ENCODE measurements at regions of chr3 and their contacts with region 1.

Region 1: DNA sequence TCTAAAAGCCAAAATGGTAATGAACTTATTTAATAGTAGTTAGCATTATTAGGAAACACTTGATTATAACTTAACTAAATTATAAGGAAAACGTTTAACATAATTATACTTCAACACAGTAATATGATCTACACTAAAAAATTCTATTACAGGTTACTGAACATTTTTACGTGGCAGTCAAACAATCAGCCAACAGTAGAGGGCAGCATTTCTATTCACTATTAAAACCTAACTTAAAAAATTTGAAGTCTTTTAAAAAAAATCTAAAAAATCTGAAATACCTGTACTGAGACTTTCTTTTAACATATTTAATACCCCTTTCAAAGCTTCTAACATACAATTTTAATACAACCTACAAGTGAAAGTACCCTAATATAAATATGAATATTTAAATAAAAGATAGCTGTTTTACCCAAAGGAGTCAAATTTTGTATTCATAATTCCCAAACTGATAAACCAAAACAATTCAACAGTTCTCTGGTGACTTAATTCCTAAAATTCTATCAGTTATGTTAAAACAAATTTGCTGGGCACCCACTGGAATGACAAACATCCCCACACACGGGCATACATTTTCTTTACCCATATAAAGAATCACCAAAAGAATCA is 41.5 kb downstream of the DLG1 start:
- DNase-seq: peak in 1 of 2 donors; percentile 76
- ATAC-seq: peak in 1 of 3 donors; percentile 48
- H3K4me3 ChIP-seq: no peak overlapping the region
- H3K4me3 Mint-ChIP-seq: no peak overlapping the region
- H3K27ac ChIP-seq: no peak overlapping the region
- H3K27ac Mint-ChIP-seq: no peak overlapping the region
- H3K4me1 ChIP-seq: no peaks in the 10 kb centered on the region
- H3K4me1 Mint-ChIP-seq: peaks cover 35 to 41% of the 10 kb centered on the region in 2 donors
- H3K27me3 ChIP-seq: no peaks in the 10 kb centered on the region
- H3K27me3 Mint-ChIP-seq: no peaks in the 10 kb centered on the region
- CTCF ChIP-seq: peak; percentile 75

Region 2: DNA sequence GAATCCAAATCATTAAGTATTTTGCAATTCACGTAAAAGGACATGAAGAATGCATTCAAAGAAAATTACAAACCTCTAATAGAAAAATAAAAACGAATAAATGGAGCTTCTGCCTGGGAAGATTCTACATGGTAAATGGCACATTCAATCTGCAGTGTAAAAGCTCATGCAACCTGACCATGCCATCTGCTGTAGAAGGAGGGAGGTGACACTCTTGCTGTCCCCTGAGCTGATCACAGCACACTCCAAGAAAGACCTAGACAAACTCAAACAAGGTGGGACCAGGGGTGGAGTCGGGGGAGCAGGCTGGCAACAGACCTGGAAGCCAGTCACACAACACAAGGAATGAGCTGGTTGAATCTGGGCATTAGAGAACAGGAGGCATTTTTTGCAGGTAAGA is 197.1 kb after region 1 on chr3:
- intact Hi-C with region 1: loop called (anchors 5 kb)
- DNase-seq: peak in 1 of 2 donors; percentile 59
- ATAC-seq: peak; percentile 37 to 63 (median 54)
- H3K4me3 ChIP-seq: no peak overlapping the region
- H3K4me3 Mint-ChIP-seq: peak overlapping the region; percentile 43
- H3K27ac ChIP-seq: no peak overlapping the region
- H3K27ac Mint-ChIP-seq: peak overlapping the region in 1 of 2 donors; percentile 1
- H3K4me1 ChIP-seq: peaks cover 20% of the 10 kb centered on the region
- H3K4me1 Mint-ChIP-seq: peaks cover 23% of the 10 kb centered on the region in 2 donors
- H3K27me3 ChIP-seq: no peaks in the 10 kb centered on the region
- H3K27me3 Mint-ChIP-seq: peaks cover 0 to 2% of the 10 kb centered on the region in 2 donors
- CTCF ChIP-seq: no peak

Region 3: DNA sequence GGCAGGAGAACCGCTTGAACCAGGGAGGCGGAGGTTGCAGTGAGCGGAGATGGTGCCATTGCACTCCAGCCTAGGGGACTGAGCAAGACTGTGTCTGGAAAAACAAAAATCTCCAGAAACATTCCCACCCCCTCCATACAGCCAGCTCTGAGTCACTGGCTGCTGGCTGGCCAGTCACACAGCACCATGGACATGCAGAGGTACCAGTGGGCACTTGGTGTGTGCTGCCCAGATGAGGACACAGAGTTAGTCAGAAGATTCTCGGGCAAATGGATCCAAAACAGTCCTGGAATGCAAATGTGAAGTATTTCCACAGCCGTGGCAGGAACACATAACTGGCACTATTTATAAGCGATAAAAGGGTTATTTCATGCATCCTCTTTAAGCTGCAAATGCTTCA is 254.2 kb after region 1 on chr3:
- intact Hi-C with region 1: loop called (anchors 2 kb)
- DNase-seq: no peak
- ATAC-seq: no peak
- H3K4me3 ChIP-seq: no peak overlapping the region
- H3K4me3 Mint-ChIP-seq: no peak overlapping the region
- H3K27ac ChIP-seq: no peak overlapping the region
- H3K27ac Mint-ChIP-seq: no peak overlapping the region
- H3K4me1 ChIP-seq: peaks cover 10% of the 10 kb centered on the region
- H3K4me1 Mint-ChIP-seq: peaks cover 7 to 8% of the 10 kb centered on the region in 2 donors
- H3K27me3 ChIP-seq: peaks cover 3% of the 10 kb centered on the region
- H3K27me3 Mint-ChIP-seq: no peaks in the 10 kb centered on the region
- CTCF ChIP-seq: no peak

Measured in natural killer cell (primary cell).